ENCODE measurements at regions of chr7 and their contacts with region 1.

Region 1: GRCh38 chr7:28955718-28956619 is 2.2 kb downstream of the TRIL start:
- DNase-seq: peak; percentile 63
- H3K27ac ChIP-seq: no peak overlapping the region
- CTCF ChIP-seq: peak; percentile 38; the same call in 1 of the 2 replicates

Region 2: DNA sequence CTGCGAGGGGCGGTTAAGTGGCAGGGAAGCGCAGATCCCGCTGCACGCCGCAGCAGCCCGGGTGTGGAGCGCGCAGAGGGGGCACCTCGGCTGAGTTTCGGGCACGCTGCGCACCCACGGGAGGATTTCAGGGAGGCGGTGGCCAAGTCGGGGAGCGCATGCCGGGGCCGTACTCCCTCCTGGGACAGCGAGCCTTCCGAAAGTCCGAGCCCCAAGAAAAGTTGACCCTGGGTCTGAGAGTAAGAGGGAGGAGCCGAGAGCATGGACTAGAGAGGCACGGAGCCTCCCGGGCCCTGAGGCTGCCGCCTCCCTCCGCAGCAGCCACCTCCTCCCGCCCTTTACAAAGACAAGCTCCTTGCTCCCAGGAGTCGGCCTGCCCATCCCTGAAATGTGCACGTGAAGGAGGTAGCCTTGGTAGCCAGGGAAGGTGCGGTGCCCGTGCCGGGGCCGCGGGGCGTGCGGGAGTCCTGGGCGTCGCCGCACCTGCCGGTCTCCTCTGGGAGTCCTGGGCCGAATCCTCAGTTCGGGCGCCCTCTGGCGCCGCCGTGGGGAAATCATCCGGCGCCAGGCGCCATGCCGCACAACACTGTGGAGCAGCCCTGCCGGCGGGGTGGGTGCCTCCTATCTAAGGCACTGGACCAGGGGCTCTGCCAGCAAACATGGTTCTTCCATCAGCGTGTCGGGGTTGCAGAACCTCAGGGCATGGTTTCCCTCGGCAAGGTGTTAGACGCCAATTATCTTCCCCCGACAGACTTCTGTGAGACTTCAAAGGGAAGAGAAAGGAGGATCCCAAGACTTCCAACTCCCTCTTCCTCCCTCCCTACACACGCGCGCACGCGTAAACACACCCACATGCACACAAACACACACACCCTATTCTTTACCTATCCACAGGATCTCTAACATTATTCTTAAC is 101.9 kb before region 1 on chr7:
- CTCF ChIA-PET with region 1: no interaction called
- POLR2A ChIA-PET with region 1: no interaction called
- DNase-seq: peak; percentile 79
- H3K27ac ChIP-seq: no peak overlapping the region
- CTCF ChIP-seq: peak; percentile 94

Region 3: GRCh38 chr7:28921822-28922221 is 34.1 kb before region 1 on chr7:
- CTCF ChIA-PET with region 1: interaction called, 30 read pairs
- POLR2A ChIA-PET with region 1: no interaction called
- DNase-seq: peak; percentile 64
- H3K27ac ChIP-seq: no peak overlapping the region
- CTCF ChIP-seq: peak; percentile 86

Region 4: GRCh38 chr7:29099891-29100847 is 144.2 kb after region 1 on chr7:
- CTCF ChIA-PET with region 1: interaction called, 37 read pairs
- POLR2A ChIA-PET with region 1: no interaction called
- DNase-seq: no peak
- H3K27ac ChIP-seq: no peak overlapping the region
- CTCF ChIP-seq: no peak

Region 5: DNA sequence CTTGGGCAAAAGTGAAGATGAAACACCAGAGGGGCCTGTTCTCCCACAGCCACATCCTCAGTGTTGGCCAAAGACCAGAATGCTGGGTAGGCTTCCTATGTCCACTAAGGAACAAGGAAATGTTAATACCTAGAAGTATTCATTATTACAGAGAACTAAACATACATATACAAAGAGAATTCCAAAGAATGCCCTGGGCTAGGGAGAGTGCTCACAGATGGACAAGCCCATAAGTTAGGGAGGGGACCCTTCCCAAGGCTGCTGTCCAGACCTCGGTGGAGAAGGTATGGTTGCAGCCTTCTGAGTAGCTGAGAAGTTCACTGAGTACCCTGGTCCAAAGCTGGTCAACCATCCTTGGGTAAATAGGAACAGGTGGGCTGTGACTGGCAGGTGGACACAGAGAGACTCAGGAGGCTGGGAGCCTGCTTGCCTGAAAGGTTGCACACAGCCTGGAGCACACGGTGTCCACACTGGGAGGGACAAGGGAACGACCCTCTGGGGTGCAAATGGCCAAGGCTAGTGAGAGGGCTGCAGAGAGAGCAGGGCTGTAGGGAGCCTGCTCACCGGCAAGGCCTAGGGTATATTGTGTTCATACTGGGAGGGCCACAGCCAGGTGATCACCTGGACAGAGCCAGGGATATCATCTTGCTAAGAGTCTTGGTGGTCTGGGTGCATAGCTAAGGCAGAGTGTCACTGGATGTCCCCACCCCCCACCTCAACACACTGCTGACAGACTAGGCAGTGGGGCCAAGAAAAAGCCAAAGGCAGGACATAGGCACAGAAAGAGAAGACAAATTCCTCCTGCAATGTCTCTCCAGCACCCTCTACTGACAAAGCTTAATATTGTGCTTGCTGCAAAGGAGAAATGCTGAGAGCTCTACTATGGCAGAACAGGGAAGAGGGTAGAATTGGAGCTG is 150.0 kb after region 1 on chr7:
- CTCF ChIA-PET with region 1: interaction called, 37 read pairs
- POLR2A ChIA-PET with region 1: no interaction called
- DNase-seq: no peak
- H3K27ac ChIP-seq: no peak overlapping the region
- CTCF ChIP-seq: peak; percentile 95